ENCODE measurements at regions of chr1 and their contacts with region 1.

Region 1: GRCh38 chr1:38859561-38860453 is at the start of gene RRAGC:
- DNase-seq: peak; percentile 100
- ATAC-seq: peak; percentile 97 to 99 (median 98)
- H3K4me3 ChIP-seq: peak within 1 kb of the TSS; percentile 74 to 98 (median 95)
- H3K27ac ChIP-seq: peak within 1 kb of the TSS; percentile 32 to 93 (median 90)
- H3K4me1 ChIP-seq: peaks cover 0 to 81% (median 60%) of the 10 kb centered on the region in 9 donors
- H3K27me3 ChIP-seq: no peaks in the 10 kb centered on the region
- CTCF ChIP-seq: no peak
- total RNA-seq, gene RRAGC: 20.3 to 32.3 (median 23.2) TPM

Region 2: DNA sequence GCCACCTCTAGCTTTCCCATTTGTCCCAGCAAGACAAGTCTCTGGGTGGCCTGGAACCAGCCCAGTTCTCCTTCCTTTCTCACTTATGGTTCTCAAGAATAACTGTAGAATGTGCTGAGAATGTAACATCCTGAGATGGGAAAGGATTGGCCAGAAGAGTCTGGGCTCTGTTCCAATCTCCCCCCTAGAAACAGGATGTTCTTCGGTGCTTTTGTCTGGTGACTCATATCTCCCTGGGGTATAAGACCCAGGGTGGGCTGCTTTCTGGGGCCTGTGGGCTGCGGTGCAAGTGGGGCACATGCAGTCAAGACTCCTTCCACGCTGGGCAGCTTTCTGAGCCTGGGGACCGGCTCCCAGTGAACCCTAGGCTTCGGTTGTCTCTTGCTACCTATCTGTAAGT is 562.0 kb before region 1 on chr1:
- intact Hi-C with region 1: no loop called
- DNase-seq: no peak
- ATAC-seq: no peak
- H3K4me3 ChIP-seq: no peak overlapping the region
- H3K27ac ChIP-seq: no peak overlapping the region
- H3K4me1 ChIP-seq: no peaks in the 10 kb centered on the region
- H3K27me3 ChIP-seq: peaks cover 0 to 67% (median 32%) of the 10 kb centered on the region in 7 donors
- CTCF ChIP-seq: no peak

Region 3: GRCh38 chr1:38898653-38899230 is 38.9 kb after region 1 on chr1:
- intact Hi-C with region 1: no loop called
- DNase-seq: no peak
- ATAC-seq: no peak
- H3K4me3 ChIP-seq: no peak overlapping the region
- H3K27ac ChIP-seq: no peak overlapping the region
- H3K4me1 ChIP-seq: peaks cover 0 to 9% (median 0%) of the 10 kb centered on the region in 9 donors
- H3K27me3 ChIP-seq: no peaks in the 10 kb centered on the region
- CTCF ChIP-seq: no peak

Region 4: DNA sequence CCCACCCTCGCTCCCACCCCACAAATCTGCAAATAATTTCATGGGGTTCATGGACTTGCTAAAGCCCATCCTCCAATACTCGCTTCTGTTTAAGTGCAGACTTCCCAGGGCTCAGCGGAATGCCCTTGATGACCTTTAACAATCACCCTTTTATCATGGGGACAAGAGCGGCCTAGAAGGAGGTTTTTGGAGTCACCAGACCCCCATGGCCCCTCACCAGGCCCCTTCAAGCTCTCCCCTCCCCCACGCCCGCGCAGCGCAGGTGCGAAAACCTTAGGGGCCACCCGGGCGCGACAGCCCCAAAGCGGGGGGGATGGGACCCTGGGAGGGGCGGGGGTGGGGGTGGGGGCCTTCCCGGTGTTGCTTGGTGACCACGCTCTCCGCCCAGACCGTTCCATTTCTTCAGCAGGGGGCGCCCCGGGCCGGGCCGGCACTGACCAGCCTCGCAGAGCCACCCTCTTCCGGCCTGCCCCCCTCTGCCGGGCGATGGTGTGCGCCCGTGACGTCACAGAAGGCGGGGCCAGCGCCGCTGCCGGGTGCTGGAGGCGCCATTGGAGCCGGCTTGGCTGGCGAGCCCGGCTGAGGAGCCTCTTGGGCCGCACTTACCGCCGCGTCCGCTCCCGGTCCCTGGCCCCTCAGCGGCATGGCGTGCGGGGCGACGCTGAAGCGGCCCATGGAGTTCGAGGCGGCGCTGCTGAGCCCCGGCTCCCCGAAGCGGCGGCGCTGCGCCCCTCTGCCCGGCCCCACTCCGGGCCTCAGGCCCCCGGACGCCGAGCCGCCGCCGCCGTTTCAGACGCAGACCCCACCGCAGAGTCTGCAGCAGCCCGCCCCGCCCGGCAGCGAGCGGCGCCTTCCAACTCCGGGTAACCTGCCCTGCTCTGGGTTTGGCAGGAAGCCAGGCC is 131.2 kb after region 1 on chr1 and contains the start of gene AKIRIN1:
- intact Hi-C with region 1: loop called in 5 of 10 experiments (anchors 5 to 10 kb)
- DNase-seq: peak; percentile 98 to 100
- ATAC-seq: peak; percentile 97 to 99 (median 98)
- H3K4me3 ChIP-seq: peak within 1 kb of the TSS; percentile 77 to 99 (median 94)
- H3K27ac ChIP-seq: peak within 1 kb of the TSS; percentile 81 to 98 (median 97)
- H3K4me1 ChIP-seq: peaks cover 0 to 44% (median 28%) of the 10 kb centered on the region in 9 donors
- H3K27me3 ChIP-seq: no peaks in the 10 kb centered on the region
- CTCF ChIP-seq: peak in 8 of 9 donors; percentile 10 to 55 (median 46)
- total RNA-seq, gene AKIRIN1: 47.3 to 73.8 (median 58.8) TPM

Region 5: GRCh38 chr1:39026051-39026865 is 166.5 kb after region 1 on chr1 and contains the start of gene NDUFS5:
- intact Hi-C with region 1: loop called in 1 of 10 experiments (anchors 10 kb)
- DNase-seq: peak; percentile 88 to 91
- ATAC-seq: peak; percentile 94 to 98 (median 96)
- H3K4me3 ChIP-seq: peak within 1 kb of the TSS; percentile 62 to 86 (median 75)
- H3K27ac ChIP-seq: peak within 1 kb of the TSS; percentile 89 to 99 (median 95)
- H3K4me1 ChIP-seq: peaks cover 3 to 35% (median 19%) of the 10 kb centered on the region in 9 donors
- H3K27me3 ChIP-seq: no peaks in the 10 kb centered on the region
- CTCF ChIP-seq: no peak
- total RNA-seq, gene NDUFS5: 303 to 646 (median 513) TPM

Region 6: GRCh38 chr1:39086865-39087409 is 227.1 kb after region 1 on chr1:
- intact Hi-C with region 1: loop called in 5 of 10 experiments (anchors 5 to 10 kb)
- DNase-seq: peak in 1 of 2 donors; percentile 51
- ATAC-seq: peak; percentile 46 to 81 (median 76)
- H3K4me3 ChIP-seq: peak overlapping the region in 1 of 10 donors; percentile 9
- H3K27ac ChIP-seq: peak overlapping the region in 9 of 10 donors; percentile 21 to 77 (median 63)
- H3K4me1 ChIP-seq: peaks cover 5 to 40% (median 21%) of the 10 kb centered on the region in 9 donors
- H3K27me3 ChIP-seq: peaks cover 0 to 23% (median 4%) of the 10 kb centered on the region in 7 donors
- CTCF ChIP-seq: no peak

Region 7: DNA sequence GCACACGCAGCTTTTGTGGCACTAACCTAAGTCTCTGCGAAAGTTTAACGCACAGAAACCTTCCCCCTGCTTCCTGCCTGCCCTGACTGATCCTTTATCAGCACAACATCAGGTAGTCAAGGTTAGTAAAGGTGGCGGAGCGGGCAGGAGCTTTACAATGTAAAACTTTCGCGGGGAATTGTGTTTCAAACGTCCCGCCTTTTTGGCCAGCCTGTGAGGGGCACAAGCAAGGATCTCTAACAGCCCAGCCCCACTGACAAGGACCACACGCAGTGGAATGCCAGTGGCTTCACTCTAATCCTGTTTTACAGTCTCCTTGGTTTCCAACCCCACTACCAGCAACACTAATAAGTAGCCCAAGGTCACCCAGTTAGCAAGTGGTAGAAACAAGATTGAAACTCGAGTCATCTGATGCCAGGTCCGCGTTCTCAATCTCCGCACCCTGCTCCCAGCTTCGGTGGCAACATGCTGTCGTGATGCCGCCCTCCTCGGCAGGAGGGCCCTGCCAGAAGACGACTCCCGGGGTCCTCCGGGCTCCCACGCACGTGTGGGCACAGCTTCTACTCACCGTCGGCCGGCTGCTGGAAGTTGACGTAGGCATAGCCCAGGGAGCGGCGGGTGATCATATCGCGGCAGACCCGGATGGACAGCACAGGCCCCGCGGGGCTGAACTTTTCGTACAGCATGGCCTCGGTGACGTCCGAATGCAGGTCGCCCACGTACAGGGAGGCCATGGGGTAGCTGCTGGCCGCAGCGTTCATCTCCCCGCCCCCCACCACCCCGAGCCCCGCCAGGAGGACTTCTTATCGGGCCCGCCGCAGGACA is 715.6 kb after region 1 on chr1:
- intact Hi-C with region 1: loop called in 1 of 10 experiments (anchors 10 kb)
- DNase-seq: peak; percentile 58 to 73
- ATAC-seq: peak; percentile 43 to 79 (median 68)
- H3K4me3 ChIP-seq: peak overlapping the region; percentile 72 to 94 (median 83)
- H3K27ac ChIP-seq: peak overlapping the region; percentile 63 to 96 (median 94)
- H3K4me1 ChIP-seq: peaks cover 4 to 48% (median 36%) of the 10 kb centered on the region in 9 donors
- H3K27me3 ChIP-seq: no peaks in the 10 kb centered on the region
- CTCF ChIP-seq: no peak